ENCODE measurements at regions of chr19 and their contacts with region 1.

Region 1: DNA sequence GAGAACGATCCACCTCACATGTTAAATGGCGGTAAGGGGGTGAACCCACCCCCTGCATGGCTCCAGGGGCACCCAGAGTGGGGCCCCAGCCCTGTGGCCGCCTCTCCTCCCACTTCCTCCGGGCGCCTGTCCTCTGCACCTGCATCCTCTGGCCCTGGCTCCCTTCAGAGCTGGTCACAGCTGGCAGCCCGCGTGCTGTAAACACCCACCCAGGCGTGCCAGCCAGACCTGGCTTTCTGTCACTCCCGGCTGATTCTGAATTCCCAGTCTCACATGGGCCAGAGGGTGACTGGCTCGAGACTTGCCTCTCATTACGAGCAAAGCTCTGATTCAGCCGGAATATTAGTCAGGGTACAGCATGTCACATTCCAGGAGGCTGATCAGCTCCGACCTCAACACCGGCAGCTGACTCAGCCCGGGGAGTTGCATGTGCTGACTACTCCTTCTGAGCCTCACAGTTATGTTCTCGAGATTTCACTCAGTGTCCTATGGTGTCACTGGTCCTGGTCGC is 75.1 kb downstream of the GNG7 start:
- DNase-seq: peak; percentile 99
- ATAC-seq: peak; percentile 98
- H3K4me3 ChIP-seq: no peak overlapping the region
- H3K27ac ChIP-seq: peak overlapping the region; percentile 19; the same call in 1 of the 2 replicates
- H3K4me1 ChIP-seq: peaks cover 9% of the 10 kb centered on the region
- H3K27me3 ChIP-seq: no peaks in the 10 kb centered on the region
- CTCF ChIP-seq: no peak
- POLR2A ChIP-seq: no peak
- RAD21 ChIP-seq: no peak

Region 2: GRCh38 chr19:2438178-2438864 is 189.1 kb before region 1 on chr19:
- CTCF ChIA-PET with region 1: no interaction called
- POLR2A ChIA-PET with region 1: interaction called, 20 read pairs
- dilution Hi-C with region 1: no loop called
- in situ Hi-C with region 1: no loop called
- intact Hi-C with region 1: no loop called
- DNase-seq: no peak
- ATAC-seq: no peak
- H3K4me3 ChIP-seq: no peak overlapping the region
- H3K27ac ChIP-seq: no peak overlapping the region
- H3K4me1 ChIP-seq: no peaks in the 10 kb centered on the region
- H3K27me3 ChIP-seq: no peaks in the 10 kb centered on the region
- CTCF ChIP-seq: no peak
- POLR2A ChIP-seq: no peak
- RAD21 ChIP-seq: no peak

Region 3: GRCh38 chr19:2602391-2603181 is 24.8 kb before region 1 on chr19:
- CTCF ChIA-PET with region 1: no interaction called
- POLR2A ChIA-PET with region 1: no interaction called
- dilution Hi-C with region 1: no loop called
- in situ Hi-C with region 1: no loop called
- intact Hi-C with region 1: no loop called
- DNase-seq: peak; percentile 81
- ATAC-seq: peak; percentile 74
- H3K4me3 ChIP-seq: peak overlapping the region; percentile 6; the same call in 1 of the 2 replicates
- H3K27ac ChIP-seq: 0 out of 2 replicates have a peak overlapping the region, but pooled peaks have one; percentile 38
- H3K4me1 ChIP-seq: no peaks in the 10 kb centered on the region; the same call in 1 of the 2 replicates
- H3K27me3 ChIP-seq: peaks cover under 1% of the 10 kb centered on the region; the same call in 1 of the 2 replicates
- CTCF ChIP-seq: no peak
- POLR2A ChIP-seq: no peak
- RAD21 ChIP-seq: no peak